Mammary epithelial cell (primary cell): ENCODE measurements at regions of chr2 and their contacts with region 1.

Region 1: DNA sequence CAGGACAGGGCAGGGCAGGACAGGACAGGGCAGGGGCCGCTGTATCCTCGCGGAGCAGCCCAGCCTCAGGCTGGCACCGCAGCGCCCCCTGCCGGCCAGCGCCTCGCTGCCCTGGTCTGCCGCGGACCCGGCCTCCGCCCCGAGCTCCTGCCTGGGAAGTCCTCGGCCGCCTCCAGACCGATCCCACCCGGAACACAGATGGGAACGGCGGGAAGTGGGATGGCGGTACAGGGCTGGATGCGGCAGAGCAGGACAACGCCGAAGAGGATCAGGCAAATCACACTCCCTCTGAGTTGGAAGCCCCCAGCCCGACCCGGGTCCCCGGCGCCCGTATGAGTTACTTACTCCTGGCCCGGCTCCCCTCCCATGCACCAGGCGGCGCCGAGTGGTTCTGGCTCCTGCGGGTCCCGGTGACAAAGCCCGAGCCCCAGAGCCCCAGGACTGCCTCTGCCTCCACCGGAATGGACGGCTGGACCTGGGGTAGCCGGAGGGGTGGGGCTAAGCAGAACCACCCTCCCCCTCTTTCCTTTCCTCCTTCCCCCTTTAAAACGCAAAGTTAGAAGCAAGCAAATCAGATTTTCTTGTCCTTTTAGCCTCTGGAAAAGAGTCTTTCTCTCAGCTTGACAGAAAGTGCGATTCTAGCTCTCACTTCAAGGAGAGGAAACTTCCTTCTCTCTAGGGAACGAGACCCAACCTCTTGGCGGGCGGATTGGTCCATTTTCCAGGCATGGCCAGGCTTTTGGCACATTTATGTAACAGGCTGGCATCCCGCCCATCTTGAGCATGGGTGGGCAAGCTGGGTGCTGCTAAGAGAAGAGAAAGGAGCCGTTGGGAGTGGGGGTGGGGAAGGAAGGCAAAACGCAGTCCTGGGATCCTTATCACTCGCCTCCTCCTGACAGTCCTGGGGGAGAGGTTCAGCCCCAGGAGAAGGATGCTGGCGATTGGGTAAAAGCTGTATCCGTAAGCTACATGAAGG is at the start of gene TP53I3:
- DNase-seq: peak; percentile 82
- H3K4me3 ChIP-seq: peak within 1 kb of the TSS; percentile 59 to 67 (median 66)
- H3K27ac ChIP-seq: peak within 1 kb of the TSS; percentile 76
- H3K4me1 ChIP-seq: peaks cover 22% of the 10 kb centered on the region
- H3K27me3 ChIP-seq: no peaks in the 10 kb centered on the region
- CTCF ChIP-seq: peak; percentile 66 to 85
- total RNA-seq, gene TP53I3: 75.3 to 85.8 TPM

Region 2: GRCh38 chr2:23926750-23927571 is 157.7 kb before region 1 on chr2 and contains the start of gene ATAD2B:
- CTCF ChIA-PET with region 1: interaction called, 9 read pairs
- dilution Hi-C with region 1: no loop called
- in situ Hi-C with region 1: no loop called
- intact Hi-C with region 1: loop called (anchors 1 kb)
- DNase-seq: peak; percentile 96
- H3K4me3 ChIP-seq: peak within 1 kb of the TSS; percentile 91 to 98 (median 97)
- H3K27ac ChIP-seq: peak within 1 kb of the TSS; percentile 90
- H3K4me1 ChIP-seq: peaks cover 14% of the 10 kb centered on the region
- H3K27me3 ChIP-seq: no peaks in the 10 kb centered on the region
- CTCF ChIP-seq: peak; percentile 72 to 77
- total RNA-seq, gene ATAD2B: 14.0 to 16.4 TPM

Region 3: DNA sequence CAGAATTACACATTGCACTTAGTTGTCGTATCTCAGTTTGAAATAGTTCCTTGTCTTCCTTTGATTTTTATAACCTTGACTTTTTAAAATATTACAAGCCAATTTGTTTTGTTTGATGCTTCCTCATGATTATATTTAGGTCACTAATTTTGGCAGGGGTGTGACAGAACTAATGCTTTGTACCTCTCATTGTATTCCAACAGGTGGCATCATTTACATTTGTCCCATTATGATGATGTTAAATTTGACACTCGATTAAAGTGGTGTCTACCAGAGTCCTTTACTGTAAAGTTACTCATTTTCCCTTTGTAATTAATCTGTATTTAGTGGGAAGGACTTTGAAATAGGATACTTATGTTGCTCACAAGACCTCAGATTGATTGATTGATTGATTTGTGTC is 96.3 kb before region 1 on chr2:
- CTCF ChIA-PET with region 1: no interaction called
- dilution Hi-C with region 1: no loop called
- in situ Hi-C with region 1: no loop called
- intact Hi-C with region 1: loop called (anchors 1 kb)
- DNase-seq: peak; percentile 6
- H3K4me3 ChIP-seq: no peak overlapping the region
- H3K27ac ChIP-seq: no peak overlapping the region
- H3K4me1 ChIP-seq: no peaks in the 10 kb centered on the region
- H3K27me3 ChIP-seq: no peaks in the 10 kb centered on the region
- CTCF ChIP-seq: peak; percentile 33 to 53

Region 4: GRCh38 chr2:24111407-24111901 is 26.8 kb after region 1 on chr2:
- CTCF ChIA-PET with region 1: no interaction called
- dilution Hi-C with region 1: no loop called
- in situ Hi-C with region 1: no loop called
- intact Hi-C with region 1: no loop called
- DNase-seq: peak; percentile 59
- H3K4me3 ChIP-seq: no peak overlapping the region
- H3K27ac ChIP-seq: peak overlapping the region; percentile 20
- H3K4me1 ChIP-seq: peaks cover 19% of the 10 kb centered on the region
- H3K27me3 ChIP-seq: no peaks in the 10 kb centered on the region
- CTCF ChIP-seq: no peak

Region 5: DNA sequence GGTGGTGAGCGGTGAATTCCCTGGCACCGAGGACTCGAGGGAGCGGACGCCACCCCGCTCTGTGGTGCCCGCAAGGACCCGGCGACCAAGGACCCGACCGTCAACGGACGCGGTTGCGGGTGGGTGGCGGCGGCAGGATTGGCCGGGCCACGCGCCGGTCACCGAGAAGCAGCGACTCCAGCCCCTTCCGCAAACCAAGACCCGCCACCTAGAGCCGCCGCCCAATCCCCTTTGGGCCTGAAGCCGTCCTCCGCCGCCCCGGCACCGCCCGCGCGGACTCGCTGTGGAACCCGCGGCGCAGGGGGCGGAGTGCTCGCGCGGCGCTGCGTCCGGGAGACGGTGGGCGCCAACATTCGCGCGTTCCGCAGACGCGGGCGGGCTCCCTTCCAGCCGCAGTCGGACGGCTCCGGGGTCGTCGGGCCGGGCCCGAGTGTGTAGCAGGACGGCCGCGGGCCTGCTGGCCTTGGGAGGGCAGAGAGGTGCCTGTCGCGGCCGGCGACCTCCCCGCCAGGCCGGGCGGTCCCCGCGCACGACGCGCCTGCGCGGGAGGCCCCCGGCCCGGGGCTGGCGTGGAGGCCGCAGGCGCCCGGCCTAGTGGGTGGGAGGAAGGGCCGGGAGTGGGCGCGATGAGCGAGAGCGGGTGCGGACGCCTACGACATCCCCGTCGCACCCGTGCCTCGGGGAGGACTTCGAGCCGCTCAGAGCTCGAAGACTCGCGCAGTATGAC is 38.7 kb after region 1 on chr2 and contains the starts of genes FAM228B and PFN4:
- CTCF ChIA-PET with region 1: interaction called, 3 read pairs
- dilution Hi-C with region 1: no loop called
- in situ Hi-C with region 1: no loop called
- intact Hi-C with region 1: loop called (anchors 2 kb)
- DNase-seq: peak; percentile 77
- H3K4me3 ChIP-seq: peak within 1 kb of the TSS; percentile 61 to 94 (median 73)
- H3K27ac ChIP-seq: peak within 1 kb of the TSS; percentile 45
- H3K4me1 ChIP-seq: peaks cover 4% of the 10 kb centered on the region
- H3K27me3 ChIP-seq: no peaks in the 10 kb centered on the region
- CTCF ChIP-seq: no peak
- total RNA-seq, gene FAM228B: 4.1 to 6.5 TPM
- total RNA-seq, gene PFN4: 0.33 to 0.92 TPM

Region 6: DNA sequence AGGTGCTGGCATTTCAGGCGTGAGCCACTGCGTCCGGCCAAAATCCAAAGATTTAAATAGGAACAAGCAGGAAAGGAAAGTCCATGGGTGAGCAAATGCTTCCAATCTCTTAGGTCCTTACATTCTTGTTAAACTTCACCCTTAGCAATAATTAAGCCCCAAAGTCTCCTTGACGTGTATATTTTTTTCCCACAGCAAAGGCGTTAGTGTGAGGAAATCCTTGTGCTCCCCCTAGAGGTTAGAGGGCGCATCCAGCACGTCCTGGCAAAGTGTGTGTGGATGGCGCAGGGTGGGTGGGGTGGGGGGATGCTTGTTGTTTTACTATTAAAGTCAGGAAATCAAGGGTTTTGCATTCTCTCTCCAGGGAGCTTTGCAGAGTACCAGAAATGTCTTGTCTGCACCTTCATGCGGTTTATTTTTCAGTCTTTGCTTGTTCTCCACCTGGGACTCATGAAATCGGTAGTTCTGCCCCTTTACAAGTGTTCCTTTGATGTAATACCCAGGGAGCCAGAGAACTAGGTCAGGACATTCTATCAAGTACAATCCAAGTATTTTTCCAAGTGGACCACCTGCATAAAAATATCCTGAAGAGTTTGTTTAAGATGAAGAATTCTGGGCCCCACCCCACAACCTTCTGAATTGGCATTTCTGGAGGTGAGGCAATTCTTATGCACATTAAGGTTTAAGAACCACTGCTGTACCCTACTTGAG is 297.8 kb after region 1 on chr2:
- CTCF ChIA-PET with region 1: no interaction called
- dilution Hi-C with region 1: no loop called
- in situ Hi-C with region 1: no loop called
- intact Hi-C with region 1: loop called (anchors 1 kb)
- DNase-seq: peak; percentile 42
- H3K4me3 ChIP-seq: no peak overlapping the region
- H3K27ac ChIP-seq: no peak overlapping the region
- H3K4me1 ChIP-seq: peaks cover 5% of the 10 kb centered on the region
- H3K27me3 ChIP-seq: no peaks in the 10 kb centered on the region
- CTCF ChIP-seq: peak; percentile 61 to 78